Psoas muscle (tissue), 8 donors: ENCODE measurements at regions of chr1 and their contacts with region 1.

Region 1: DNA sequence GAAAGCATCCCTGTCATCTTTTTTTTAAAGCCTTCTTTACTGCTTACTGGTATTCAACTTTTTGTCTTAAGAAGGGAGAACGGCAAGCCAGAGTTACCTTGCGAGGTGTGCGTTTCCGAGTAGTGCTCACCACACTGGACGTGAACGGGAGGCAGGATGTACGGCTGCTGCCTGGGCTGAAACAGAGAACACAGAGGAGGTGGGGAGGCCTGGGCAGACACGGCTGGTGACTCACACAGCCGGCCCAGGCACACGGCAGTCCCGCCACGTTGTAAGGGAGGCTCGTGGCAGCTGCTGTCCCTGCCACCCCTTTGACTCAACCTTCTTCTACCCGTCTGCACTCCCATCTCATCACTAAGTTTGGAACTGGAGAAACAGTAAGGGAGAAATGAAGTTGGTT is 105.8 kb downstream of the SMYD2 start:
- DNase-seq: peak; percentile 50 to 65
- ATAC-seq: peak; percentile 76 to 96 (median 94)
- H3K4me3 ChIP-seq: no peak overlapping the region
- H3K27ac ChIP-seq: peak overlapping the region; percentile 44
- H3K4me1 ChIP-seq: no peaks in the 10 kb centered on the region
- H3K27me3 ChIP-seq: no peaks in the 10 kb centered on the region
- CTCF ChIP-seq: no peak

Region 2: DNA sequence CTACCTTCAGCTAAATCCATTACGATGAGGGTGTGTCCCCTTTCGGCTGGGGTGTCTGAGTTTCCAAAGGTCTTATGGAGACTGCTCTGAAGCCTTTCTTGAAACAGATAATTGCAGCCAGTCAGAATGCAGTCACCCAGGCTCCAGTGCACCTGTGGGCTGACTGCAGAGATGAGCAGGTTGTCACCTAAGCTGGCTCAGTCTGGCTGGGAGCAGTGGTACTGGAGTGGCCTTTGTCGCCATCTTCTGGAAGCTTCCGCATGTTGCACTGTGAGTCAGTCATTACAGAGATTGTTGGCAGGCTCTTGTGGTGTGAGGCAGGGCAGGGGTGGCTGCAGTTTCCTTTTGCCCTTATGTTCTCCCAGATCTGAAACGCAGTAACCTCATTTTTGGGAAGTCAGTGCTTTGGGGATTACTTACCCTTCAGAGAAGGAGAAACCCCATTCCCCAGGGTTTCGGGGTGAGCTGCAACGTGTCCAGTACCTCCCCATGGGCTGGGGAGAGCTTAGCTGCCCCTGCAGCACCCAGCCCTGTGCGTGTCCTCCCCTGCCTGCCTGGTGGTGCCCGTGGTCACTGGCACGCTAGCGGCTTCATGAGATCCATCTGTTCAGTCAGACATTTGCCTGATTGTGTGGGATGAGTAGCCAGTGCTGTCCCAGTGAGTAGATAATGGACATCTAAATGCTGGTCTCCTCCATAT is 57.8 kb before region 1 on chr1:
- intact Hi-C with region 1: no loop called
- DNase-seq: peak; percentile 79 to 89
- ATAC-seq: peak; percentile 95 to 96 (median 95)
- H3K4me3 ChIP-seq: no peak overlapping the region
- H3K27ac ChIP-seq: no peak overlapping the region
- H3K4me1 ChIP-seq: peaks cover 3% of the 10 kb centered on the region
- H3K27me3 ChIP-seq: no peaks in the 10 kb centered on the region
- CTCF ChIP-seq: peak; percentile 94

Region 3: DNA sequence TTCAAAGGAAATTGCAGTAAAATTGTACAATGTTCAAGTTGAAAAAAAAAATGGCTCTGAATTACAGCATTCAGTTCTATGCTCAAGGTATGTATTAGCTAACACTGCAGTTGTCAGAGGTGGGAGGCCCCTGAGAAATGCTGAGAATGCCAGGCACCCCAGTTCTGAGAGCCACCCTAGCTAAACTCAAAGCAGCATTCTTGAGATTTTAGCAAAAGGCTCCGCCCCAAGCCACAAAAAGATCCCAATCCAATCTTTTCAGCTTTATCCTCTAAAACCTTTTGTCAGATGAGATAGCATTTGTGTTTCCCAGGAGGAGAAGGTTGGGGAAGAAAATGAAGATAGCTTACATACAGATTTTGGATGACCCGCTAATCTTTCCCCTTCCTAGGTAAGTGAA is 37.0 kb before region 1 on chr1:
- intact Hi-C with region 1: no loop called
- DNase-seq: no peak
- ATAC-seq: no peak
- H3K4me3 ChIP-seq: no peak overlapping the region
- H3K27ac ChIP-seq: no peak overlapping the region
- H3K4me1 ChIP-seq: peaks cover 6% of the 10 kb centered on the region
- H3K27me3 ChIP-seq: no peaks in the 10 kb centered on the region
- CTCF ChIP-seq: no peak

Region 4: DNA sequence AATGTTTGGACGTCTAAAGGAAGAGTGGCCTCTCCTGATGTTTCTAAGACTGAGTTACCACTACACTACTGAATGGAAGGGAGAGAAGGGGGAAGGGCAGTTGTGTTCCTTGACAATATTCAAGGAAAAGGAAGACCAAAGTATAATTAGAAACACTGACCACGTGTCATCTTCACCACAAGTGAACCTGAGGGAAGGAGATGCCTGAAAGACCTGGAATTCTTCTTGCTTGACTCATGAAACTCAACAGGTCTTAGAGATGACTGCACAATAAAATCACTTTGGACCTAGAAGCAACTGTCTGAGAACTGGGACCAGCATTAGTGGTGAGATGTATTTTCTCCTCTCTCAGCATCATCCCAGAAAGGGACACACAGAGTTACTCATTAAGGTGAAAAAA is 108.0 kb after region 1 on chr1:
- intact Hi-C with region 1: loop called in 1 of 2 experiments (anchors 10 kb)
- DNase-seq: no peak
- ATAC-seq: peak in 2 of 4 donors; percentile 40 to 62
- H3K4me3 ChIP-seq: no peak overlapping the region
- H3K27ac ChIP-seq: peak overlapping the region; percentile 79
- H3K4me1 ChIP-seq: peaks cover 61% of the 10 kb centered on the region
- H3K27me3 ChIP-seq: no peaks in the 10 kb centered on the region
- CTCF ChIP-seq: no peak

Region 5: GRCh38 chr1:214895011-214895600 is 508.4 kb after region 1 on chr1:
- intact Hi-C with region 1: no loop called
- DNase-seq: no peak
- ATAC-seq: no peak
- H3K4me3 ChIP-seq: no peak overlapping the region
- H3K27ac ChIP-seq: no peak overlapping the region
- H3K4me1 ChIP-seq: no peaks in the 10 kb centered on the region
- H3K27me3 ChIP-seq: no peaks in the 10 kb centered on the region
- CTCF ChIP-seq: no peak